ENCODE measurements at regions of chr9 and their contacts with region 1.

Region 1: DNA sequence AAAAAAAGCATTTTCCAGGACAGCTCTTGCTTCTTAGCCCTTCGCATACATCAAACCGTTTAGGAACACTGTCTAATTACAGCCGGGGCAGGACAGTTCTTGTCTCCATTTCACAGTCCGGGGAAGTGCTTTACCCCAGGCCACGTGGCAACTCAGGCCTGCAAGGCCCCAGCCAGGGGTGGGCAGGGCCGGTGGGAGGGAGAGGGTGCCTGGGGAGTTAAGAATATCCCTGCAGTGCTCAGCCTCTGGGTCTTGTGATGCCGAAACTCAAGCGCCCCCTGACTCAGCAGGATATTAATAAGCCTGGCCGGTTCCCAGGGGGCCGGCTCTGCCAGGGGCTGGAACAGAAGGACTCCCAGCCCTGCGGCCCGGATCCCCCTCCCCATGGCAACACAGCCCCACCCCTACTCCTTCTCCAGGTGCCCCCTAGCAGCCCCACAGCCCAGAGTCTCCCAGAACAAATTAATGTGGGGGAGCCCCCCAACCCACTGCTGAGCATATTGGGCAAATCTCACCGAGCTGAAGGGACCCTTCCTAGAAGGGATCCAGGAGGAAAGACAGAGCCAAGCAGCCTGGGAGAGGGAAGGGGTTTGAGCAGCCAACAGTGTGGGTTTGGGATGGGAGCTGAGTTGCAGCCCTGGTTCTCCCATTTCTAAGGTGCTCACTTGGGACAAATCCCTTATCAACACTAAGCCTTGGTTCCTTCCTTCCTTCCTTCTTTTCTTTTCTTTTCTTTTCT is 45.3 kb downstream of the PLPP7 start:
- DNase-seq: no peak
- H3K4me3 ChIP-seq: no peak overlapping the region
- CTCF ChIP-seq: no peak

Region 2: GRCh38 chr9:131053896-131054295 is 280.9 kb before region 1 on chr9:
- CTCF ChIA-PET with region 1: interaction called, 71 read pairs
- POLR2A ChIA-PET with region 1: no interaction called
- DNase-seq: no peak
- H3K4me3 ChIP-seq: no peak overlapping the region
- CTCF ChIP-seq: no peak

Region 3: GRCh38 chr9:131107760-131108159 is 227.0 kb before region 1 on chr9:
- CTCF ChIA-PET with region 1: no interaction called
- POLR2A ChIA-PET with region 1: no interaction called
- DNase-seq: no peak
- H3K4me3 ChIP-seq: no peak overlapping the region
- CTCF ChIP-seq: no peak

Region 4: DNA sequence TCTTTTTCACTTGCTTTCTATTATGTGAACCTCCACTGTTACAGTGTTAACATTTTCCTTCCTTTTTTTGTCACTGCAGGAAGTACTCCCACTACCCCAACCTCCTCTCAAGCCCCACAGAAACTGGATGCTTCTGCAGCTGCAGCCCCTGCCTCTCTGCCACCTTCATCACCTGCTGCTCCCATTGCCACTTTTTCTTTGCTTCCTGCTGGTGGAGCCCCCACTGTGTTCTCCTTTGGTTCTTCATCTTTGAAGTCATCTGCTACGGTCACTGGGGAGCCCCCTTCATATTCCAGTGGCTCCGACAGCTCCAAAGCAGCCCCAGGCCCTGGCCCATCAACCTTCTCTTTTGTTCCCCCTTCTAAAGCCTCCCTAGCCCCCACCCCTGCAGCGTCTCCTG is 190.6 kb before region 1 on chr9:
- CTCF ChIA-PET with region 1: interaction called, 10 read pairs
- POLR2A ChIA-PET with region 1: no interaction called
- DNase-seq: no peak
- H3K4me3 ChIP-seq: no peak overlapping the region
- CTCF ChIP-seq: no peak

Region 5: DNA sequence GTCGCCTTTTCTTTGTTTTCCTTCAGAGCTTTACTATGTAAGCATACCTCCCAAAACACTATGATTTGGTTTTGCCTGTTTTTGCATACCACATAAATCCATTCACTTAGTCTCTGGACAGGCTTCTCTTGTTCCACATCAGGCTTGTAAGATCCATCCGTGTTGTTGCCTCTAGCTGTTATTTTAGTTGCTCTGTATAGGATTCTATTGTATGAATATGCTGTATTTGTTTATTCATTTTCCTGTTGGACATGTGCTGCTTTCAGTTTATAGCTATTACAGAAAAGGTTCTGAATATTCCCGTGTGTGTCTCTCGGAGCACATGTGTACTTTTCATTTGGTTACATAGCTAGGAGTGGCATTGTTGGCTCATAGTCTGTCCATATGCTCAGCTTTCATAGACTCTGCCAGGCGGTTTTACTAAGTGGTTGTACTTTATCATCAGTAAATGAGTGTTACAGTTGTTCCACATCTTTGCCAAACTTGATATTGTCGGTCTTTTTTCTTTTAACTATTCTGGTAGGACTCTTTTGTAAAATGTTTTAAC is 167.6 kb before region 1 on chr9:
- CTCF ChIA-PET with region 1: interaction called, 403 read pairs
- POLR2A ChIA-PET with region 1: no interaction called
- DNase-seq: no peak
- H3K4me3 ChIP-seq: no peak overlapping the region
- CTCF ChIP-seq: no peak

Region 6: GRCh38 chr9:131178382-131178781 is 156.4 kb before region 1 on chr9:
- CTCF ChIA-PET with region 1: interaction called, 403 read pairs
- POLR2A ChIA-PET with region 1: interaction called, 4 read pairs
- DNase-seq: no peak
- H3K4me3 ChIP-seq: no peak overlapping the region
- CTCF ChIP-seq: peak; percentile 91

Region 7: GRCh38 chr9:131187957-131188356 is 146.8 kb before region 1 on chr9:
- CTCF ChIA-PET with region 1: interaction called, 403 read pairs
- POLR2A ChIA-PET with region 1: no interaction called
- DNase-seq: no peak
- H3K4me3 ChIP-seq: no peak overlapping the region
- CTCF ChIP-seq: no peak

Region 8: GRCh38 chr9:131402738-131403492 is 68.1 kb after region 1 on chr9:
- CTCF ChIA-PET with region 1: no interaction called
- POLR2A ChIA-PET with region 1: no interaction called
- DNase-seq: peak; percentile 61
- H3K4me3 ChIP-seq: peak overlapping the region; percentile 32
- CTCF ChIP-seq: no peak

Region 9: GRCh38 chr9:131500939-131501541 is 166.2 kb after region 1 on chr9:
- CTCF ChIA-PET with region 1: no interaction called
- POLR2A ChIA-PET with region 1: no interaction called
- DNase-seq: peak; percentile 44
- H3K4me3 ChIP-seq: no peak overlapping the region
- CTCF ChIP-seq: no peak

Region 10: DNA sequence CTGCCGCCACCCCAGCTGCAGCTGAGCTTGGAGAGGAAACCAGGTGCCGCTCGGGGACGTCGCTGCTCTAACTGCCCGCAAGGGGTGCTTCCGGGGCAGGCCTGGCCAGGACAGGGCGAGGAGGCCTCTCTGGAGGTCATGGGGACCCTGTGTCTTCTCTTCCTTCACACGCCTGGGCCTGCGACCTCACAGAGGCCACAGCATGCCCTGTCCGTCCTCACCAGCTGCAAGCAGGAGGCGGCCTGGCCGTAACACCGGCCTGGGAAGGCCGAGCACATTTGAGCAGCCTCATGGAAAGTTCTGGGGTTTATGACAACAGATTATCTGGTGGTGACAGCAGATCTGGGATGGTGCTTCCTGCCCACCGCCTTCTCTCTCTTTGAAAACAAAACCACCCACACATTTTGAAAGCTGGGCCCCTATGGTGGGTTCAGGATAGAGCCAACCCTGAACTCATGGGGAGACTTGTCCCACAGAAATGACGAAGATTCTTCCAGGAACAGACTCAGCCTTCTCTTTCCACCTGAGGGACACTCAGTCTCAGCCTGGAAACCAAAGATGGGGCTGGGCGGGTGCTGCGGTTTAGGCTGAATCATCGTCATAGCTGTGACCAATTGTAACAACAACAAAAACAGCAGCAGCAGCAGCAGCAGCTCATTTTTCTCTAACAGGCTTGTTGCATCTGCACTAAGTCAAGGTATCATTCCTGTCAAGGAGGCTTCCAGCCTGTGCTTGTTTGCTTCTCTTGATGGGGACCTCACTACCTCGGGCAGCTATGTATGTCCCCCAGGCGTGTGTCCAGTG is 504.7 kb after region 1 on chr9:
- CTCF ChIA-PET with region 1: no interaction called
- POLR2A ChIA-PET with region 1: no interaction called
- DNase-seq: no peak
- H3K4me3 ChIP-seq: no peak overlapping the region
- CTCF ChIP-seq: no peak